Stomach (tissue), 19 donors: ENCODE measurements at regions of chr1 and their contacts with region 1.

Region 1: GRCh38 chr1:86499987-86500593 is 31.4 kb downstream of the CLCA1 start:
- DNase-seq: no peak
- H3K4me3 ChIP-seq: no peak overlapping the region
- H3K27ac ChIP-seq: no peak overlapping the region
- H3K4me1 ChIP-seq: peaks cover 6 to 40% (median 14%) of the 10 kb centered on the region in 4 donors
- H3K27me3 ChIP-seq: peaks cover 0 to 8% (median 0%) of the 10 kb centered on the region in 3 donors
- CTCF ChIP-seq: peak in 5 of 7 experiments; percentile 34 to 96 (median 63)
- EP300 ChIP-seq: no peak
- POLR2A ChIP-seq: no peak

Region 2: GRCh38 chr1:86370601-86371022 is 129.5 kb before region 1 on chr1:
- intact Hi-C with region 1: loop called (anchors 10 kb)
- DNase-seq: no peak
- H3K4me3 ChIP-seq: no peak overlapping the region
- H3K27ac ChIP-seq: no peak overlapping the region
- H3K4me1 ChIP-seq: no peaks in the 10 kb centered on the region
- H3K27me3 ChIP-seq: no peaks in the 10 kb centered on the region
- CTCF ChIP-seq: no peak
- EP300 ChIP-seq: no peak
- POLR2A ChIP-seq: no peak

Region 3: GRCh38 chr1:86395771-86396497 is 104.2 kb before region 1 on chr1 and contains the start of gene ODF2L:
- intact Hi-C with region 1: no loop called
- DNase-seq: peak; percentile 87 to 96
- H3K4me3 ChIP-seq: peak within 1 kb of the TSS; percentile 74 to 82 (median 78)
- H3K27ac ChIP-seq: peak within 1 kb of the TSS; percentile 27 to 85 (median 82)
- H3K4me1 ChIP-seq: peaks cover 0 to 31% (median 20%) of the 10 kb centered on the region in 4 donors
- H3K27me3 ChIP-seq: no peaks in the 10 kb centered on the region
- CTCF ChIP-seq: no peak
- EP300 ChIP-seq: no peak
- POLR2A ChIP-seq: no peak
- total RNA-seq, gene ODF2L: 38.8 to 159 (median 68.7) TPM

Region 4: DNA sequence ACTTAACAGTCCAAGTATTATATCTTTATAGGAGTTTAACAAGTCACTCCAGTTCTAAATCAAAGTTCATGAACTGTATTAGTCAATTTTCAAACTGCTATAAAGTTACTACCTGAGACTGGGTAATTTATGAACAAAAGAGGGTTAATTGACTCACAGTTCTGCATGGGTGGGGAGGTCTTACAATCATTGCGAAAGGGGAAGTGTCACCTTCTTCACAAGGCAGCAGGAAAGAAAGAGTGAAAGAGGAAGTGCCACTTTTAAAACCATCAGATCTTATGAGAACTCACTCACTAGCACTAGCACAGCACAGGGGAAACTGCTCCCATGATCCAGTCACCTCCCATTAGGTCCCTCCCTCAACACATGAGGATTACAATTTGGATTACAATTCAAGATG is 116.8 kb after region 1 on chr1:
- intact Hi-C with region 1: no loop called
- DNase-seq: peak in 1 of 2 donors; percentile 68
- H3K4me3 ChIP-seq: no peak overlapping the region
- H3K27ac ChIP-seq: no peak overlapping the region
- H3K4me1 ChIP-seq: no peaks in the 10 kb centered on the region
- H3K27me3 ChIP-seq: no peaks in the 10 kb centered on the region
- CTCF ChIP-seq: no peak
- EP300 ChIP-seq: no peak
- POLR2A ChIP-seq: no peak